ENCODE measurements at regions of chr9 and their contacts with region 1.

Region 1: DNA sequence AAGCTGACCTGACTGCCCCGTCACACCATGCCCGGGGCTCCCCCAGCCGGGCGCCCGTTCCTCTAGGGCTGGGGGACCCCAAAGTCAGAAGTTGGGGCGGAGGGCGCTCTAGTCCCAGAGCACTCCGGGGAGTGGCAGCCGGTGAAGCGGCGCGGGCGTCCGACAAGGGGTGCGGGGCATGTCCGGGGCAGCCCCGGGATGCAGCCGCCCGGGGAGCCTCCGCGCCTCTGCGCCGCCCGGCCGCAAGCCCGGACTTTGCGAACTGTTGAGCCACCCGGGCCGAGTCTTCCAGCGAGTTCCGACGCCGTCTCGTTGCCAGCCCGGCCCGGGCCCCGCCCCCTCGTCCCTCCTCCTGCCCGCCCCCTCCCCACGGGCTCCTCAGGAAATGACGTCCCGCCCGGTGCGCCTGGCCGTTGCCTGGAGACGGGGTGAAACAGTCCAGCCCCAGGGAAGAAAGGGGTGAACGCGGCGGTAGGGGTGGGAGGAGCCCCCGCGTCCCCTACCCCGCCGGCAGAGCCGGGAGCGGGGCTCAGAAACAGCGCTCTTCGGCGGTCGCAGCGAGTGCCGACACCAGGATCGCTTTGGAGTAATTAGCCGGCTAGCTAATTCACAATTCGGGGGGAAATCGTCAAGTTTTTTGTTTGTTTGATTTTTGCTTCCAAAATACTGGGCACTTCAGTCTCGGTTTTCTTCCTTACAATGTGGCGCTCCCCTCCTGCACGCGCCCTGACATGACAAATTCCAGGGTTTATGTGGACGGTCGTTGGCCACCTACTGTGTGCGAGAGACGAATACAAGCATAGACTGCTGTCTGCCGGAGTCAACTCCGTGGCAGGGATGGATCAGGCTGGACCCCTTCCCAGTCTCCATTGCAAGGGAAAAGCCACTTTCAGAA is at the start of gene WHRN:
- DNase-seq: peak; percentile 92
- CTCF ChIP-seq: no peak

Region 2: GRCh38 chr9:114434878-114435311 is 70.5 kb before region 1 on chr9:
- CTCF ChIA-PET with region 1: interaction called, 10 read pairs
- POLR2A ChIA-PET with region 1: no interaction called
- DNase-seq: peak; percentile 62
- CTCF ChIP-seq: peak; percentile 63

Region 3: DNA sequence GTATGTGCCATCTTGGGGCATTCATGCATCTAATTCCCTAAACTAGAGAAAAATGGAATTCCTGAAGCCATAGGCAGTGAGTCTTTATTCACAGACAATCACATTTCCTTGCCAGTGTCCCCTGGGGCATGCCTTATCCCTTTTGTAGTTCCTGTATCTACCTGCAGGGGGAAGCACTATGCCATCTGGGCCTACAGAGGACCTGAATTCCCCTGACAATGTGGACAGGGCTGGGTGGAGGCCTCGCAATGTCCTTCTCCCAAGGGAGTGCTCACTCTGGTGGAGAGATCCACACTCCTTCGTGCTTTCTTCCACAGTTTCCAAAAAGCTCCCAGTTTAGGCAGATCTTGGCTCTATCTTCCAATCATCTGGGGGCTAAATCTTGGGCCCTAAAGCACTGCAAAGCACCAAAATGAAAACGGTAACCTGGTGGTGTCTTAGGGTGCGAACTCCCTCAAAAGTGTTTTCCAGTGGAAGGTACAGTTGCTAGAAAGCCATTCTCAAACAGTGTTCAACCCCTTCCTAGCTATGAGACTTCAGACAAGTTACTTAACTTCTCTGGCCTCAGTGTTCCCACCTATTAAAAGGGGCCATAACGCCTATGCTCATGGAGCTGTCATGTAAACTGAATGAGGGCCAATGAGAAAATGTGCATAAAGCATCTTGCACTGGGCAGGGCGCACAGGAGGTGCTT is 17.7 kb before region 1 on chr9:
- CTCF ChIA-PET with region 1: interaction called, 39 read pairs
- POLR2A ChIA-PET with region 1: no interaction called
- DNase-seq: peak; percentile 70
- CTCF ChIP-seq: peak; percentile 80

Region 4: DNA sequence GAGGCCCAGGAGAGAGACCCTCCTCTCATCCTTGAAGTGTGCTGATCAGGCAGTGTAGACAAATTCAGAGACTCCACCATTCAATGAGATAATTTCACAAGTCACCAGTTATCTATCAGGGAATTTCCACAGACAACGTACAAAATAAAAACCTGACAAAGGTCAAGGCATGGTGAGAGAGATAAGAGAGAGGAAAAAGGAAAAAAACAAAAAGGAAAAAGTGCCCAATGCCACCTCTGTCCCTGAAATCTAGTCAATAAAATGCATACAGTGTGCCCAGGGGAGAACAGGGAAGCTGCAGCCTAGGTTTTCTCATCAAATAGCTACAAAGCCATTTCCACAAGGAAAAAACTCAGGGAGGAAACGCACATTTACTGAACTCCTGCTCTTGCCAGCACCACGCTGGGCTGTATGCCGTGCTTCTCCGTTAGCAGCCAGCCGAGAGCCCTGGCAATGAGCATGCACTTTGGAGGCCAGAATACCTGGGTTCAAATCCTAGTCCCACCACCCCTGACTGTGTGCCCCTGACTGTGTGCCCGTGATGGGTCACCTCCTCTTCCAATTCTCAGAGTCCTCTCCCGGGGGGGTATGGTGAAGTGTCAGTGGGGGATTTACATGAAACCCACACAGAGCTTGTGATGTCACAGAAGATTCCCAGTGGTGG is 11.8 kb before region 1 on chr9:
- CTCF ChIA-PET with region 1: interaction called, 39 read pairs
- POLR2A ChIA-PET with region 1: no interaction called
- DNase-seq: no peak
- CTCF ChIP-seq: no peak

Region 5: DNA sequence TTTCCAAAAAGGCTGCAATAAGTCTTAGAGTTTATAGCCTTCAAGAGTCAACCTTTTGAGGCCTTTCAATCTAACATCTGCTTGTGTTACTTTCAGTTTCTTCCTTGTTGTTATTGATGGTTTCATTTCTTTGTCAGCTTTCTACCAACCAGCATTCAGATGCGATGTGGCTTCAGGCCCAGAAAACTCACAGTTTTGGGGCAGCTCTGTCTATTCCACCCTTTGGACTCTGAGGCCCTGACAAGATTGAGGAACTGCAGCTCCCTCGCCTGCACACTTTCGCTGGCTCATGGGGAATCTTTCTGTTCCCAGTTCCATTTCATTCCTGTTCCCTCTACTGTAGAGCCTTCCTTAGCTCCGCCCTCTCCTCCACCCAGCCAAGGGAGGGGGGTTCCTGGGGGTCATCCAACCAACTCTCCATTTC is 13.2 kb after region 1 on chr9:
- CTCF ChIA-PET with region 1: interaction called, 26 read pairs
- POLR2A ChIA-PET with region 1: no interaction called
- DNase-seq: peak; percentile 49
- CTCF ChIP-seq: no peak